PC-9 (cell line): ENCODE measurements at regions of chr9 and their contacts with region 1.

Region 1: GRCh38 chr9:17810728-17811571 is 232.1 kb downstream of the SH3GL2 start:
- DNase-seq: peak in 1 of 2 experiments; percentile 11
- H3K4me3 ChIP-seq: no peak overlapping the region
- H3K27ac ChIP-seq: no peak overlapping the region
- H3K4me1 ChIP-seq: no peaks in the 10 kb centered on the region
- H3K27me3 ChIP-seq: no peaks in the 10 kb centered on the region
- CTCF ChIP-seq: peak; percentile 86

Region 2: DNA sequence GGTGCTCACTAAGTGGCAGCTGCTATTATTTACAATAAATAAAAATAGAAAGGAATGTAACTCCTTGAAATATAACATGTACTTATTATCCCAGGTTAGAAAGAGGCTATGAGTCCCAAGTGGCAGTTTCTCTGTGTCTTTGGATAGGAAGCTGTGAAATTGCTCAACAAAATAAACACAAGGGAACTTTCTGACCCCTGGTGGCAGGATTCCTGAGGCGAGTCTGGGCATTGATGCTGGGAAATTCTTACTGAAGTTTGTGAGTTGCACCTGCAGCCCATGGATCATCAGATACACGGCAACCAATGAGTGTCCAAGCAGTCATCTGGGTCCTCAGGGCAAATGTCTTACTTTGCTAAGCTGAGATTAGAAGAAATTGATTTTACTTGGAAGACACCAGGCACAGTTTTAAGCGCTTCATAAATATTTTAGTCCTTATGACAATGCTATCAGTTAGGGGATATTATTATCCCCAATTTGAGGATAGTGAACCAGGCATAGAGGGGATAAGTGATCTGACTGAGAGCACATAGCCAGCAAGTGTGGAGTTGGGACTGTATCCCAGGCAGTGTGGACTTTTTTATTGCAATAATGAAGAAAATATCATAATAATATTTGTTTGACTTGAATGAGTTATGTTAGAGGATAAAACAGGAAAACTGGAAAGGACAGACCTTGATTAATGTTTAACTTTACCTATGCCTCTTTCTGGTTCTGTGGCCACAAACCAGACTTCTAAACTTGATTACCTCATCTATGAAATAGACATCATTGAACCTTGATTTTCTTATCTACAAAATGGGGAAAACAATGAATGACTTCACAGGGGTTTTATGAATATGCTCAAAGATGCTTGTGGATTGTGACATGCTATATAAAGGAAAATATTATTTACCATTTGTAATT is 397.5 kb after region 1 on chr9:
- CTCF ChIA-PET with region 1: no interaction called
- POLR2A ChIA-PET with region 1: no interaction called
- intact Hi-C with region 1: loop called (anchors 2 kb)
- DNase-seq: peak in 1 of 2 experiments; percentile 11
- H3K4me3 ChIP-seq: no peak overlapping the region
- H3K27ac ChIP-seq: no peak overlapping the region
- H3K4me1 ChIP-seq: no peaks in the 10 kb centered on the region
- H3K27me3 ChIP-seq: no peaks in the 10 kb centered on the region
- CTCF ChIP-seq: peak; percentile 54